ENCODE measurements at regions of chr4 and their contacts with region 1.

Region 1: GRCh38 chr4:108620101-108620932 is at the start of gene RPL34:
- DNase-seq: peak; percentile 72 to 96
- ATAC-seq: peak; percentile 100
- H3K4me3 ChIP-seq: peak within 1 kb of the TSS; percentile 80
- H3K27ac ChIP-seq: peak within 1 kb of the TSS; percentile 86 to 97
- H3K4me1 ChIP-seq: peaks cover 28% of the 10 kb centered on the region; the same call in 2 of the 3 replicates
- CTCF ChIP-seq: no peak
- EP300 ChIP-seq: no peak
- POLR2A ChIP-seq: peak; percentile 51
- RAD21 ChIP-seq: no peak
- polyA plus RNA-seq, gene RPL34: 1,255 and 1,328 TPM in 2 replicates

Region 2: GRCh38 chr4:108650212-108651013 is 30.1 kb after region 1 on chr4 and contains the start of gene OSTC:
- CTCF ChIA-PET with region 1: no interaction called
- POLR2A ChIA-PET with region 1: interaction called, 17 read pairs
- DNase-seq: peak; percentile 80 to 93
- ATAC-seq: peak; percentile 92 to 94
- H3K4me3 ChIP-seq: peak within 1 kb of the TSS; percentile 99
- H3K27ac ChIP-seq: peak within 1 kb of the TSS; percentile 90 to 93
- H3K4me1 ChIP-seq: peaks cover 10% of the 10 kb centered on the region; the same call in 1 of the 3 replicates
- CTCF ChIP-seq: no peak
- EP300 ChIP-seq: no peak
- POLR2A ChIP-seq: peak; percentile 75
- RAD21 ChIP-seq: no peak
- polyA plus RNA-seq, gene OSTC: 133 and 166 TPM in 2 replicates

Region 3: GRCh38 chr4:108683479-108683878 is 63.2 kb after region 1 on chr4:
- CTCF ChIA-PET with region 1: no interaction called
- POLR2A ChIA-PET with region 1: interaction called, 11 read pairs
- DNase-seq: peak; percentile 2 to 27
- ATAC-seq: peak; percentile 59 to 72; a peak in 3 of 6 replicates
- H3K4me3 ChIP-seq: no peak overlapping the region
- H3K27ac ChIP-seq: no peak overlapping the region
- H3K4me1 ChIP-seq: no peaks in the 10 kb centered on the region
- CTCF ChIP-seq: peak; percentile 44
- EP300 ChIP-seq: no peak
- POLR2A ChIP-seq: no peak
- RAD21 ChIP-seq: peak; percentile 26; a peak in 1 of 5 replicates